ENCODE measurements at regions of chr2 and their contacts with region 1.

Region 1: DNA sequence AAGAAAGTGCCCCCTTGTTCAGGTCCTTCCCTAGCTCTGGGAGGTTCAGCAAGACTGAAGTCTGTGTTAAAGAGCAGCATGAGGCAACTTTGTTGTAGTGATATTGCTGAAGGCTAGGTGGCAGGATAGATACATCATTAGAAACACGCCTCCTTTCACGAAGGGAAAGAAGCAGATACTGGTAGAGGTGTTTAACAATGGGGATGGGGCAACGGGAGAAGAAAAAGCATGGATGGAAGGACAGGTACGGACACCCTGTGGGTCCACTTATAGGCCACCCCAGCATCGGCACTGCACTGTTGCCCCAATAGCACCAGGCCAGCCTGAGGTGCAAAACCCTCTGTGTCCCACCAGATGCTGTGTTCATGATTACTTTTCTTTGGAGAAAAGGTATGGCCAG is 3.5 kb upstream of the IGFBP5 start:
- H3K4me3 ChIP-seq: no peak overlapping the region
- H3K27ac ChIP-seq: peak overlapping the region; percentile 57; the same call in 1 of the 2 replicates
- H3K4me1 ChIP-seq: peaks cover 44% of the 10 kb centered on the region
- CTCF ChIP-seq: peak; percentile 85

Region 2: GRCh38 chr2:216519154-216519762 is 179.6 kb before region 1 on chr2:
- CTCF ChIA-PET with region 1: interaction called, 15 read pairs
- POLR2A ChIA-PET with region 1: no interaction called
- H3K4me3 ChIP-seq: no peak overlapping the region
- H3K27ac ChIP-seq: no peak overlapping the region
- H3K4me1 ChIP-seq: no peaks in the 10 kb centered on the region
- CTCF ChIP-seq: peak; percentile 56; the same call in 1 of the 2 replicates

Region 3: DNA sequence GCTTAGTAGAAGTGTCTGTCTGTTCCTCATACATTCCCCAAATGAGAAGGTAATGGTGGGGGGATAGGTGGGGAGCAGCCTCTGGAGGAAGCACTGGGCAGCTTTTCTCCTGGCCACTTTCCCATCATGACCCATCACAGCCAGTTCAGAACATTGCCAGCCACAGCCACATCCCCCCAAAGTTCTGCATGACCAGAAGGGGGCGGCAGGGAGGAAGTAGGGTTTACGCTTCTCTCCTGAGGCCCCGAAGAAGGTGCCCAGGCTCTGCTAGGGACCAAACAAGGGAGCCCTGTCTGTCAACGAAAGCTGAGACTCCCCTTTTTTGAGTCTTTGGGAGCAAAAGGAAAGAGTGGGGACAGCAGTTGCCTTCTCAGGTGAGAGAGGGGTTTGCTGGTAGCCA is 11.2 kb before region 1 on chr2:
- CTCF ChIA-PET with region 1: interaction called, 16 read pairs
- POLR2A ChIA-PET with region 1: interaction called, 5 read pairs
- H3K4me3 ChIP-seq: no peak overlapping the region
- H3K27ac ChIP-seq: no peak overlapping the region
- H3K4me1 ChIP-seq: peaks cover 10% of the 10 kb centered on the region
- CTCF ChIP-seq: peak; percentile 34; the same call in 1 of the 2 replicates

Region 4: GRCh38 chr2:217142649-217143266 is 443.9 kb after region 1 on chr2:
- CTCF ChIA-PET with region 1: interaction called, 31 read pairs
- POLR2A ChIA-PET with region 1: no interaction called
- H3K4me3 ChIP-seq: no peak overlapping the region
- H3K27ac ChIP-seq: no peak overlapping the region
- H3K4me1 ChIP-seq: no peaks in the 10 kb centered on the region
- CTCF ChIP-seq: no peak

Region 5: GRCh38 chr2:217510771-217511291 is 811.9 kb after region 1 on chr2:
- CTCF ChIA-PET with region 1: interaction called, 12 read pairs
- POLR2A ChIA-PET with region 1: no interaction called
- H3K4me3 ChIP-seq: no peak overlapping the region
- H3K27ac ChIP-seq: no peak overlapping the region
- H3K4me1 ChIP-seq: no peaks in the 10 kb centered on the region
- CTCF ChIP-seq: peak; percentile 89